Activated T-helper 2 cell treated with anti-CD3 and anti-CD28 coated beads, Interferon-gamma antibody, Interleukin-2, Interleukin-4, amounts not matched to agents 10 μg/mL and 5 μg/mL and 100 μg/mL, durations not matched to agents 14 hours and 24 hours and 36 hours (primary cell): ENCODE measurements at regions of chr5 and their contacts with region 1.

Region 1: DNA sequence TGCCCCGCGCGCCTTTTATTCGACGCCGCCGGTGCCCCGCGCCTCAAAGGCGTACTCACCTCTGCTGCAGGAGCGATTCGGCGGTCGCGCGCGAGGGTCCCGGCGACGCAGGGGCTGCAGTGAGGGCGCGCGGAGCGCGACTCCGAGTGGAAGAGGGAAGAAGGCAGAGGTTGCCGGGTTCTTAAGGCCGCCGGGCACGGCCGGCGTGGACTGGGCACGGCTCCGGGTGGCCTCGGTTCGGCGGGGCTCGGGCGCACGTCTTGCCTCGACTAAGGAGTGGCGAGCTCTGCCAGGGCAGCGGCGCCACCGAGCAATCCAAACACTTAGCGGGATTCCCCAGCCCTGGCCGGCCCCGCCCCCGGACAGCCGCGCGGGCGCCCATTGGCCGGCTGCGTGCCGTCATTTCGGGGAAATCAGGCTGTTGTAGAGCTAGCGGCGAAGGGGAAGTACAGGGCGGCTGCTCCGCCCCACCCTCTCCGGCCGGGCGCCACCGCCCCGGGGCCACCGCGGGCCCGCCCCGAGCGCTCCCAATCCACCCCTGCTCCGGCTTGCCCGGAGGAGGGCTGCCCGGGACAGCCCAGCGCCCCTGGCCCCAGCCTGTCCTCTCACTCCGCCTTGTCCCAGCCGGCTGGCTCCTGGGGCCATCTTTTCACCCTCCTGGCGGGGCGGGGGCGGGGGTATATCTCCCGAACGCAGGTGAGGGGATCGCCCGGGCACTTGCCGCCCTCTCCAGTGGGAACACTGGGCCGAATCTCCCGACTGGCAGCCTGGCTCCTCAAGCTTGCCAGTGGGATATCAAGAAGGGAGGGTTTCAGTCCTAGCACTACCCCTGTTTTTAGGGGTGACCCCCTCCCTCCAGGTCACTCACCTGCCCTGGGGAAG is at the start of gene IRF1:
- DNase-seq: peak; percentile 99
- H3K4me3 Mint-ChIP-seq: peak within 1 kb of the TSS; percentile 95
- H3K27ac Mint-ChIP-seq: peak within 1 kb of the TSS; percentile 81
- H3K4me1 Mint-ChIP-seq: peaks cover 71% of the 10 kb centered on the region
- H3K27me3 Mint-ChIP-seq: no peaks in the 10 kb centered on the region
- total RNA-seq, gene IRF1: 155 TPM in 2 replicates

Region 2: DNA sequence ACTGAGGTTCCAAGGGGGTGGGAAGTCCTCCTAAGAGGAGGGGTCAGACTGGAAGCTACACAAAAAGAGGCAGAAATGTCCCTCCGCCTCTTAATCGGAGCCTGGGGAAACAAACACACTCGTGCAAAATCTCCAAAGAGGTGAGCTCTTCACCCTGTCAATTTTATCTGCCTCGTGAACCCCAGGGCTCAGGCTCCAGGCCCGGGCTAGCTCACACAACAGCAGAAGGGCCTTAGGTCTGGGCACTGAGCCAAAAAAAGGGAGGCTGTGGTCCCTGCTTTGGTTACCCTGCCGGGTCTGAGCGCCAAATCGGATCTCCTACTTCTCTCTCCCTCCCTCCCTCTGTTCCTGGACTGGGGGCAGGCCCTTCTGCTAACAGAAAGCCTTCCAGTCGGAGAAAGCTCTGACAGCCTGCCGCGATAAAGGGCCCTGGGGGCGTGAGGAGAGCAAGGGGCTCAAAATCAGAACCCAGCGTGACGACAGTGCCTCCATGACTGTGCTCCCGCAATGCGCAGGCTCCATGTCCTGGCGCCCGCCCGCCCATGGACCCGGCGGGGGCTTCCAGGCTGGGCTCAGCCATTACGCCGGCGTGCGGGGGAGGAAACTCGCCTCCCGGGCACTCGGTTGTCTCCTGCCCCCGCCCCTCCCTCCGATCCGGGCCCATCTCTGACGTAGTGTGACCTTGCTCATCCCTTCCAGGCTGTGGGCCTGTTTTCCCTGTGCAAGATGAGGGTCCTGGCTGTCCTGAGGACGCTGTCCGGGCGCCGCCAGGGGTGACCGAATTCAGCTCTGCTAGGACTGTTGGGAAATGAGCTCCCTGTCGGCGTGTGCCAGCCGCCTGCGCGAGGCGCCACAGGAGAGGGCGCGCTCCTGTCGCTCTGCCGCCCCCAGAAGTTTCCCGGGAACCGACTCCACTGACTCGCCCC is 197.4 kb before region 1 on chr5:
- intact Hi-C with region 1: loop called (anchors 5 kb)
- DNase-seq: peak; percentile 53
- H3K4me3 Mint-ChIP-seq: peak overlapping the region; percentile 92
- H3K27ac Mint-ChIP-seq: peak overlapping the region; percentile 90
- H3K4me1 Mint-ChIP-seq: peaks cover 34% of the 10 kb centered on the region
- H3K27me3 Mint-ChIP-seq: no peaks in the 10 kb centered on the region

Region 3: GRCh38 chr5:132456296-132457001 is 34.3 kb before region 1 on chr5:
- intact Hi-C with region 1: loop called (anchors 5 kb)
- DNase-seq: peak; percentile 54
- H3K4me3 Mint-ChIP-seq: peak overlapping the region; percentile 45
- H3K27ac Mint-ChIP-seq: peak overlapping the region; percentile 97
- H3K4me1 Mint-ChIP-seq: peaks cover 82% of the 10 kb centered on the region
- H3K27me3 Mint-ChIP-seq: no peaks in the 10 kb centered on the region

Region 4: GRCh38 chr5:132500931-132501630 is 10.4 kb after region 1 on chr5:
- intact Hi-C with region 1: no loop called
- DNase-seq: peak; percentile 69
- H3K4me3 Mint-ChIP-seq: no peak overlapping the region
- H3K27ac Mint-ChIP-seq: peak overlapping the region; percentile 58
- H3K4me1 Mint-ChIP-seq: peaks cover 22% of the 10 kb centered on the region
- H3K27me3 Mint-ChIP-seq: peaks cover under 1% of the 10 kb centered on the region

Region 5: DNA sequence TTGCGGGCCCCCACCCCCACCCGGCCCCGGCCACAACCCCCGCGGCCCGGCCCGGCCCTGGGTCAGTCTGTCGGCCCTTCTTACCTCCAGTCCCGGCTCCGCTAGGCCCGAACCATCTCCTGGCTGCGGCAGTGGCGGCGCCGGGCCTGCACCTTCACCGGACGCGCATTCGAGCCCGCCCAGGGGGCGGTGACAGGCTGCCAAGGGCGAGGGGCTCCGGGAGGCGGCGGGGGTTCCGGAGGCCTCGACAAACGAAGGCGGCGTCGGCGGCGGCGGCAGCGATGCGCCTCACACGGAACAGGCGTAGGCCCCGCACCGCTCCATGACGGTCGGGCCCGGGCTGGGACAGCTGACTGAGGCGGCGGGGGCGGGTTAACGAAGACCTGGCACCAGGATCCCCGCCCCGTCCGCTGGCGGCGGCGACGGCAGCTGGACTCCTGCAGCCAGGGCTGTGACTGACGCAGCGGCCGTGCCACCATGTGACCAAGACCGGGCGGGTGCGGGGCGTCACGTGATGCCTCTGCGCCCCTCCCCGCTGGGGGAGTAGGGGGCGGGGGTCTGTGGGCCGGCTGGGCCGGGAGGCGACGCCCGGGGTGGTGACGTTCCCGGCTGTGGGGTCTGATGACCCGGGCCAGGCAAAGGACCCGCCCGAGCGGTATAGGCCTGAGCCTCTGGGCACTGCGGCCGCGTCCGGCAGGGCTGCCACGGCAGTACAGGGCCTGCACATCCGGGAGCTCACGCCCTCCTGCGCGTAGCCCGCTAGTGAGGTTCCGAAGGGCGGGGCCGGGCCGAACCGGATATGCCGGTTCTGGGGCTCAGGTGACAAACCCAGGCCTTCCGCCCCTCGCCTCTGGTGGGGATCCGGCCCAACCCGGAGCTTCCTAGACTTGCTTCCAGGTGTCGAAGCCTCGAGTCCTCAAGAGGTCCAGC is 472.7 kb after region 1 on chr5 and contains the start of gene AFF4:
- intact Hi-C with region 1: loop called (anchors 10 kb)
- DNase-seq: peak; percentile 83
- H3K4me3 Mint-ChIP-seq: peak within 1 kb of the TSS; percentile 93
- H3K27ac Mint-ChIP-seq: peak within 1 kb of the TSS; percentile 95
- H3K4me1 Mint-ChIP-seq: peaks cover 17% of the 10 kb centered on the region
- H3K27me3 Mint-ChIP-seq: no peaks in the 10 kb centered on the region
- total RNA-seq, gene AFF4: 33.1 and 35.1 TPM in 2 replicates

Region 6: DNA sequence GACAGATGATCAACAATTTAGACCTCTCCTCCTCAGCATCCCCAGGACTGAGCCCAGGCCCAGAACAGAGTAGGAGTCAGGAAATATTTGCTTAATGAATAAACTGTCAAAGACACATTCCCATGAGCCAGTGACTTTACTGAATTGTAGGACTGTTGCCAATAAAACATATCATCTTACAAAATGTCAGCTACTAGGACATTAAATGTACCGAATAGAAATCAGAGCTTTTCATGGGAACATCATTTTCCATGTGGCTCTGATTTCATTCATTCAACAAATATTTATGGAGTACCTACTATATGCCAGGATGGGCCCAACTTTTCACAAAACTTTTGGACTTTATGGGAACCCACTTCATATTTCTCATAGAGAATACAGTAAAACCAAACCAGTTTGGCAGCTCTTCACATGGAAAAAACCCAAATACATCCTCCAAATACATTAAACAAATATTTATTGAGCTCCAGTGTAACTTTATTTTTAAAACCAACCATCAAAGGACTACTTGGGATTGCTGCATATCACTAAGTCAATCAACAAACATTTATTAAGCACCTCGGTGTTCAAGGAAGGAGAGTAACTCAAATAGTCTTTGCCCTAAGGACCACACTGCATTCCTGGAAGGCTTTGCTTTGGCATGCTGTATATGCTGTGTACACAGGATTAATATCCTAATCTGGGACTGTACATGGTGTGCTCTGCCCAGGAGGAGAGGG is 1502.7 kb after region 1 on chr5:
- intact Hi-C with region 1: loop called (anchors 5 kb)
- DNase-seq: no peak
- H3K4me3 Mint-ChIP-seq: no peak overlapping the region
- H3K27ac Mint-ChIP-seq: no peak overlapping the region
- H3K4me1 Mint-ChIP-seq: peaks cover 24% of the 10 kb centered on the region
- H3K27me3 Mint-ChIP-seq: no peaks in the 10 kb centered on the region